ENCODE measurements at regions of chr15 and their contacts with region 1.

Region 1: GRCh38 chr15:73608941-73609340 is 24.2 kb downstream of the NPTN start:
- DNase-seq: no peak
- H3K4me3 ChIP-seq: no peak overlapping the region
- H3K27ac ChIP-seq: no peak overlapping the region
- H3K4me1 ChIP-seq: peaks cover 0 to 18% (median 9%) of the 10 kb centered on the region in 4 experiments
- H3K27me3 ChIP-seq: no peaks in the 10 kb centered on the region

Region 2: DNA sequence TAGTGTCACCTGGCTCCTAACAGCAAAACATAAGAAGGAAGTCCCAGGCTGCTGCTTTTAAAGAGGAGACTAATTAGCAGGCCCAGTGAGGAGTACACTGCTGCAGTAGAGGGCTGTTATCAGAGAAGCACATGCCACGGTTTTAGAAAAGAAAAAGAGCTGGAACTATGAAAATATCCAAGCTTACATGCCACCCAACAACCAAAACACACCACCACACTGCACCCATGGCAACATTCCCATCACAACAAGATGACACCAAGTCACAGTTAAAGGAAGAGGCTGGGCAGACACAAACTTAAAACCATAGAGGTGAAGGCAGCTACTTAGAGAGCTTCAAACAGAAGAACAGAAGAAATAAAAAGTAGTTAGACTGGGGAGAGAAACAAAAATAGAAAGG is 12.8 kb before region 1 on chr15:
- CTCF ChIA-PET with region 1: interaction called, 16 read pairs
- POLR2A ChIA-PET with region 1: interaction called, 3 read pairs
- DNase-seq: peak in 2 of 3 donors; percentile 49 to 65
- H3K4me3 ChIP-seq: no peak overlapping the region
- H3K27ac ChIP-seq: peak overlapping the region in 1 of 2 experiments; percentile 21
- H3K4me1 ChIP-seq: peaks cover 0 to 25% (median 5%) of the 10 kb centered on the region in 4 experiments
- H3K27me3 ChIP-seq: no peaks in the 10 kb centered on the region